ENCODE measurements at regions of chr15 and their contacts with region 1.

Region 1: GRCh38 chr15:88454867-88455810 is 12.0 kb downstream of the MRPL46 start:
- DNase-seq: peak; percentile 56 to 65
- H3K4me3 ChIP-seq: no peak overlapping the region
- H3K27ac ChIP-seq: no peak overlapping the region
- H3K4me1 ChIP-seq: no peaks in the 10 kb centered on the region; a peak in 1 of 7 replicates
- H3K27me3 ChIP-seq: no peaks in the 10 kb centered on the region; a peak in 1 of 7 replicates
- CTCF ChIP-seq: peak; percentile 77 to 98 (median 94)
- EP300 ChIP-seq: no peak
- POLR2A ChIP-seq: no peak
- RAD21 ChIP-seq: peak; percentile 81 to 84

Region 2: DNA sequence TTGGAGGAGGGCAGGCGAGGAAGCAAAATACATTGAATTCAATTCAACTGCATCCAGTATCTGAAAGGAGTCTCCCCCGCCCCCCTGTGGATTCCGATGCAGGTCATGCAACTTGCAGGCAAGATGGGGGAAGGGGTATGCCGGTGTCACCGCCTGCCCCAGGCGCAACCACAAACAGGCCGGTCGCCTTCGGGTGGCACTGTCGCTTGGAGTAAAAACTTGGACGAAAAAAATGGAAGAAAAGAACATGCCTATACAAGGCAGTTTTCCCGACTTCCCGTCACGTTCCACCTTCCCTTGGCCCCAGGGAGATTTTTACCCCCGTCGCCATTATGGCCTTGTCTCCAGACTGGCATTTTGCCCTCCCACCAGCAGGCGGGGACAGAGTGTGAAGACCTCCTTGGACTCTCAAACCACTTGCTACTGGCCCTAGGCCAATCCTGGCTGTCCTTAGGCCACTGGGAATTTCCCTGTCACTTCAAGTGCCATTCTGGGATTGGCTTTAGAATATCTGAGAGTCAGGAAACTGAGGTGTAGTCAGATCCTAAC is 197.0 kb before region 1 on chr15:
- CTCF ChIA-PET with region 1: interaction called, 45 read pairs
- POLR2A ChIA-PET with region 1: interaction called, 5 read pairs
- DNase-seq: peak; percentile 44 to 89
- H3K4me3 ChIP-seq: peak overlapping the region; percentile 70 to 91 (median 82)
- H3K27ac ChIP-seq: no peak overlapping the region
- H3K4me1 ChIP-seq: peaks cover 0 to 9% (median 3%) of the 10 kb centered on the region in 4 experiments; a peak in 6 of 7 replicates
- H3K27me3 ChIP-seq: peaks cover 21 to 39% (median 32%) of the 10 kb centered on the region in 4 experiments
- CTCF ChIP-seq: peak; percentile 70 to 92 (median 84)
- EP300 ChIP-seq: no peak
- POLR2A ChIP-seq: no peak
- RAD21 ChIP-seq: peak; percentile 47 to 64

Region 3: DNA sequence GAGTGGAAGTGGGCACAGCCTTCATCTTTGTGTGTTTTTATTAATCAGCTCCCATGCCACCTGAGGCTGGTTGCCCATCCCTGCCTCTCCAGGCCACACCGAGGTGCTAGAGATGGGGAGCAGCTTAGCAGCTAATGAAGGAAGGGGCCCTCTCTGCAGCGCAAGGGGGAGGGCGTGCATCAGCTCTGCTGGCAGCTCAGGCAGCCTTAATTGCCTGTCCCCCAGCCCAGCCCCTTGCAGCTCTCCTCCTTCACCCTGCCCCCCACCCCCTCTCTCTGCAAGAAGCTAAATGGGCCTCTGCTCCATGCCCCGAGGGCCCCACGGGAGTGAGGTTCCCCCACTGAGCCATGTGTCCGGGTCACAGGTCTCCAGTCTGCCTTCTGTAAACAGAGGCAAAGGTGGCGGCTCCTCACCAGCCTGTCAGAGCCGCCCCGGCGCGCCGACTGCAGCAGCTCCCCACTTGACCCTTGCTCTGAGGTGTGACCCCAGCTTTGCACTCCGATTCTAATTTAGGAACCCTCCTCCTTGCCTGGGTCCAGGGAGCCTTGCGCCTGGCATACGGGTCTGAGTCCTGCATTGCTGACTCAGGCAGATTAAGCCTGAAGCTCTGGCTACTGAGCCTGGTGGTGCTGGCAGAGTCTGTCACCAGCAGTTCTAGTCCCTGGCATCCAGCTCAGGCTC is 170.7 kb before region 1 on chr15:
- CTCF ChIA-PET with region 1: interaction called, 19 read pairs
- POLR2A ChIA-PET with region 1: no interaction called
- DNase-seq: no peak
- H3K4me3 ChIP-seq: no peak overlapping the region
- H3K27ac ChIP-seq: no peak overlapping the region
- H3K4me1 ChIP-seq: peaks cover 0 to 12% (median 4%) of the 10 kb centered on the region in 4 experiments; a peak in 5 of 7 replicates
- H3K27me3 ChIP-seq: no peaks in the 10 kb centered on the region; a peak in 1 of 7 replicates
- CTCF ChIP-seq: no peak
- EP300 ChIP-seq: no peak
- POLR2A ChIP-seq: no peak
- RAD21 ChIP-seq: no peak

Region 4: DNA sequence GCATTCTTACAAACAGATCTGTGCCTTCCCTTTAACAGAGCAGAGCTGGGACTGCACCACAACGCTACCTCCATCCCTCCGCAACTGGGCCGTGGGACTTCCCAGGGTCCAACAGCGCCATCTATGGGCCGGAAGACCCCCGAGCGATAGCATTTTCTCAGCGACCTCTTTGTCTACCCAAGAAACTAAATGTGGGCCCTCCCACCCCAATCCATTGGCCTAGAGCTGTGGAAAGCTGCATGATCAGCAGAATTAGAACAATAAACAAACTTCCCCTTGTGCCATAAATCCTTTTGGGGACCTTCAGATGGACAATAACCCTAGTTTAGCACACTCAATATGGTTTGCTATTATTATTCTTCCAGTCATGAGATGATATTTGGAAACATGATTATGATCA is 123.9 kb before region 1 on chr15:
- CTCF ChIA-PET with region 1: interaction called, 25 read pairs
- POLR2A ChIA-PET with region 1: interaction called, 3 read pairs
- DNase-seq: peak; percentile 77 to 96
- H3K4me3 ChIP-seq: no peak overlapping the region
- H3K27ac ChIP-seq: no peak overlapping the region
- H3K4me1 ChIP-seq: no peaks in the 10 kb centered on the region
- H3K27me3 ChIP-seq: no peaks in the 10 kb centered on the region
- CTCF ChIP-seq: peak; percentile 83 to 91 (median 91)
- EP300 ChIP-seq: 0 out of 3 replicates have a peak, but pooled peaks of 1 of the 2 experiments have one; percentile 43
- POLR2A ChIP-seq: no peak
- RAD21 ChIP-seq: peak; percentile 91 to 92

Region 5: GRCh38 chr15:88348579-88349230 is 106.4 kb before region 1 on chr15:
- CTCF ChIA-PET with region 1: interaction called, 14 read pairs
- POLR2A ChIA-PET with region 1: no interaction called
- DNase-seq: no peak
- H3K4me3 ChIP-seq: no peak overlapping the region
- H3K27ac ChIP-seq: no peak overlapping the region
- H3K4me1 ChIP-seq: no peaks in the 10 kb centered on the region
- H3K27me3 ChIP-seq: no peaks in the 10 kb centered on the region
- CTCF ChIP-seq: no peak
- EP300 ChIP-seq: no peak
- POLR2A ChIP-seq: no peak
- RAD21 ChIP-seq: no peak

Region 6: GRCh38 chr15:88431441-88431840 is 23.7 kb before region 1 on chr15:
- CTCF ChIA-PET with region 1: interaction called, 27 read pairs
- POLR2A ChIA-PET with region 1: interaction called, 3 read pairs
- DNase-seq: no peak
- H3K4me3 ChIP-seq: no peak overlapping the region
- H3K27ac ChIP-seq: no peak overlapping the region
- H3K4me1 ChIP-seq: peaks cover 0 to 6% (median 2%) of the 10 kb centered on the region in 4 experiments; a peak in 4 of 7 replicates
- H3K27me3 ChIP-seq: no peaks in the 10 kb centered on the region
- CTCF ChIP-seq: no peak
- EP300 ChIP-seq: no peak
- POLR2A ChIP-seq: no peak
- RAD21 ChIP-seq: no peak

Region 7: DNA sequence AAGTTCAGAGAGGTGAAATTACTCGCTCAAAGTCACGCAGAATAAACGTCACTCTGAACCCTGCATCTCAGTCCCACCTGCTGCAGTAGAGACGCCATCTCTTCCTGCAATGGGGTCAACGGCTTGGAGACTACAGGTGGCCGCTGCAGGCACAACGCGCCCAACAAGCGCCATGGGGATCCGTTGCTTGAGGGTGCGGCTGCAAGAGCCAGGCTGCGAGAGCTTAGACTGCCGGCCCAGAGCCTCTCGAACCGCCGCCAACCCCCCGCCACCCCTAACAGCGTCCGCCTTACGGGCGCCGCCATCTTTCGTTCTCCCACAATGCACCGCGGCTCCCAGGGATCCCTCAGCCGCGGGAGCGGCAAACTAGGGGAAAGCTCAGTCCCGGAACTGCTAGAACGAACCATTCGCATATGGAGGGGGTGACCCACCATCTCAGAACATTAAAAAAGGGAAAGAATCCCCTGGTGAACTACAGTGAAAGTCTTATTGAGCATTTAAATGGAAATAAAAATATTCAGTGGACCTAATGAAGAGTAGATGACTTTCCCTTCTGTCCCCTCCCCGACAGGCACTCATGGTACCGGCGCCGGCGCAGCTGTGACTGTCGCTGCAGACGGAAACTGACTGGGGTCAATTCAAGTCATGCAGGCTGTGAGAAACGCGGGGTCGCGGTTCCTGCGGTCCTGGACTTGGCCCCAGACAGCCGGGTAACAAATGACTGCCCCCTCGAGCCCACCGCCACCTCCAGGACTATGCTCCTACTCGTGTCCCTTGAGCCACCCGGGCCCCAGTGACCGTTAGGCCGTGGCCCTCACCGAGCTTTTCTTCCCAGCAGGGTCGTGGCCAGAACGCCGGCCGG is 12.2 kb after region 1 on chr15 and contains the starts of genes MRPL46 and MRPS11:
- CTCF ChIA-PET with region 1: interaction called, 17 read pairs
- POLR2A ChIA-PET with region 1: interaction called, 20 read pairs
- DNase-seq: peak in 1 of 2 experiments; percentile 95
- H3K4me3 ChIP-seq: peak within 1 kb of the TSS; percentile 69 to 98 (median 88)
- H3K27ac ChIP-seq: peak within 1 kb of the TSS; percentile 95
- H3K4me1 ChIP-seq: no peaks in the 10 kb centered on the region; a peak in 1 of 7 replicates
- H3K27me3 ChIP-seq: no peaks in the 10 kb centered on the region
- CTCF ChIP-seq: no peak
- EP300 ChIP-seq: peak in 1 of 2 experiments; percentile 100; a peak in 2 of 3 replicates
- POLR2A ChIP-seq: peak; percentile 87 to 96
- RAD21 ChIP-seq: no peak
- total RNA-seq, gene MRPL46: 24.4 and 24.5 TPM in 2 replicates
- total RNA-seq, gene MRPS11: 41.4 and 50.4 TPM in 2 replicates

Region 8: GRCh38 chr15:88480955-88481354 is 25.8 kb after region 1 on chr15:
- CTCF ChIA-PET with region 1: no interaction called
- POLR2A ChIA-PET with region 1: no interaction called
- DNase-seq: no peak
- H3K4me3 ChIP-seq: no peak overlapping the region
- H3K27ac ChIP-seq: no peak overlapping the region
- H3K4me1 ChIP-seq: peaks cover 2 to 12% (median 8%) of the 10 kb centered on the region in 4 experiments
- H3K27me3 ChIP-seq: no peaks in the 10 kb centered on the region; a peak in 1 of 7 replicates
- CTCF ChIP-seq: no peak
- EP300 ChIP-seq: no peak
- POLR2A ChIP-seq: no peak
- RAD21 ChIP-seq: no peak

Measured in H1 (cell line).